Psoas muscle (tissue), 8 donors: ENCODE measurements at regions of chr5 and their contacts with region 1.

Region 1: DNA sequence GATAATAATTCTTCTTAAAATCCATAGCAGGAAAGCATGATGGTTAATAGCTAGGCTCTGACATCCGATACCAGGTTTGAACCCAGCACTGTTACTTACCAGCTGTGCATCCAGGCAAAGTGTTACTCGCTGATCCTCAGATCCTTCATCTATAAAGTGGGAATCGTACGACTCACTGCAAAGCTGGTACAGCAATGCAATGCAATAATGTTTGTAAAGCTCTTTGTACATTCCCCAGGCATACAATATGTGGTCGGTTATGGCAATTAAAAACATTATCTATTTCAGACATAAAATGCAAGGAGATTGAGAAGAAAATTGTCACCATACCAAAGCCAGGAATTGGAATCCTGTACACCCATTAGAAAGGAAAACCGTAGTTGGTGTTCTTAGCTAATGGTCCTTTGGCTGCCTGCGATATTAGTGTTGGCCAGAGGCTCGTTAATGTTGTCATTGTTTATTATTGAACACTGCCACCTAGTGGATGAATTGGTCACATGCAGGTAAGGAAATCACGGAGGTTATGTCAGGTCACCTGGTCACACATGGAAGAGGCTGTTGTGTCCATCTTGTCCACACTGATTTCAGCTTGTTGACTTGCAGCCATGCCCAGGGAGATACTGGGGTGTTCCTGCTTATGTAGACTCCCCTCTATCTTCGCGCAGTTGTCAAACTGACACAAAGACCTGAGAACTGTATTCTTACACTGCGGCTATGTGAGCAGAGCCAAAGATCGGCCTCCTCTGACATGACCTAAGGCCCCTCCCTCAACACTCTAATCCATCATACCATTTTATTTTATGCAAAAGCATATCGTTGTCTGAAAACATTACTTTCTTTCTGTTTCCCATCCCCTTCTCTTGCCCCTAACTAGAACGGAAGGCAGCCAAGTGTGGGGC is 87.5 kb upstream of the PPP2R2B start:
- DNase-seq: no peak
- ATAC-seq: peak; percentile 80 to 96 (median 84)
- H3K4me3 ChIP-seq: no peak overlapping the region
- H3K27ac ChIP-seq: no peak overlapping the region
- H3K4me1 ChIP-seq: no peaks in the 10 kb centered on the region
- H3K27me3 ChIP-seq: no peaks in the 10 kb centered on the region
- CTCF ChIP-seq: peak; percentile 87

Region 2: GRCh38 chr5:146541958-146542849 is 423.8 kb before region 1 on chr5:
- intact Hi-C with region 1: loop called (anchors 2 kb)
- DNase-seq: peak; percentile 54 to 76
- ATAC-seq: peak; percentile 69 to 92 (median 80)
- H3K4me3 ChIP-seq: no peak overlapping the region
- H3K27ac ChIP-seq: no peak overlapping the region
- H3K4me1 ChIP-seq: no peaks in the 10 kb centered on the region
- H3K27me3 ChIP-seq: no peaks in the 10 kb centered on the region
- CTCF ChIP-seq: peak; percentile 73